ENCODE measurements at regions of chr19 and their contacts with region 1.

Region 1: GRCh38 chr19:10388957-10389356 is 8.6 kb upstream of the TYK2 start:
- DNase-seq: peak; percentile 68 to 78 (median 75)
- H3K4me3 ChIP-seq: no peak overlapping the region
- H3K4me3 Mint-ChIP-seq: no peak overlapping the region
- H3K27ac ChIP-seq: no peak overlapping the region
- H3K27ac Mint-ChIP-seq: peak overlapping the region; percentile 10 to 79 (median 47)
- H3K4me1 ChIP-seq: no peaks in the 10 kb centered on the region
- H3K4me1 Mint-ChIP-seq: peaks cover 5 to 11% (median 6%) of the 10 kb centered on the region in 4 donors
- H3K27me3 ChIP-seq: no peaks in the 10 kb centered on the region
- H3K27me3 Mint-ChIP-seq: no peaks in the 10 kb centered on the region

Region 2: GRCh38 chr19:10259162-10259905 is 129.6 kb before region 1 on chr19:
- CTCF ChIA-PET with region 1: interaction called, 235 read pairs
- POLR2A ChIA-PET with region 1: interaction called, 19 read pairs
- intact Hi-C with region 1: loop called (anchors 1 kb)
- DNase-seq: peak; percentile 82 to 94 (median 86)
- H3K4me3 ChIP-seq: no peak overlapping the region
- H3K4me3 Mint-ChIP-seq: peak overlapping the region in 1 of 8 donors; percentile 68
- H3K27ac ChIP-seq: peak overlapping the region; percentile 16
- H3K27ac Mint-ChIP-seq: peak overlapping the region in 4 of 7 donors; percentile 17 to 76 (median 54)
- H3K4me1 ChIP-seq: peaks cover 20% of the 10 kb centered on the region
- H3K4me1 Mint-ChIP-seq: peaks cover 5 to 17% (median 8%) of the 10 kb centered on the region in 4 donors
- H3K27me3 ChIP-seq: no peaks in the 10 kb centered on the region
- H3K27me3 Mint-ChIP-seq: no peaks in the 10 kb centered on the region

Region 3: GRCh38 chr19:10279737-10280442 is 109.1 kb before region 1 on chr19:
- CTCF ChIA-PET with region 1: interaction called, 15 read pairs
- POLR2A ChIA-PET with region 1: no interaction called
- intact Hi-C with region 1: no loop called
- DNase-seq: no peak
- H3K4me3 ChIP-seq: no peak overlapping the region
- H3K4me3 Mint-ChIP-seq: no peak overlapping the region
- H3K27ac ChIP-seq: no peak overlapping the region
- H3K27ac Mint-ChIP-seq: peak overlapping the region in 2 of 7 donors; percentile 20 to 70
- H3K4me1 ChIP-seq: no peaks in the 10 kb centered on the region
- H3K4me1 Mint-ChIP-seq: peaks cover 2 to 10% (median 7%) of the 10 kb centered on the region in 4 donors
- H3K27me3 ChIP-seq: no peaks in the 10 kb centered on the region
- H3K27me3 Mint-ChIP-seq: no peaks in the 10 kb centered on the region

Region 4: GRCh38 chr19:10286803-10287737 is 101.9 kb before region 1 on chr19 and contains the start of gene ICAM4:
- CTCF ChIA-PET with region 1: interaction called, 20 read pairs
- POLR2A ChIA-PET with region 1: no interaction called
- intact Hi-C with region 1: no loop called
- DNase-seq: peak in 2 of 5 donors; percentile 19 to 25
- H3K4me3 ChIP-seq: peak within 1 kb of the TSS in 1 of 2 donors; percentile 19
- H3K4me3 Mint-ChIP-seq: peak within 1 kb of the TSS; percentile 43 to 82 (median 68)
- H3K27ac ChIP-seq: no peak within 1 kb of the TSS
- H3K27ac Mint-ChIP-seq: peak within 1 kb of the TSS in 5 of 7 donors; percentile 36 to 89 (median 60)
- H3K4me1 ChIP-seq: peaks cover 65% of the 10 kb centered on the region
- H3K4me1 Mint-ChIP-seq: peaks cover 29 to 68% (median 46%) of the 10 kb centered on the region in 4 donors
- H3K27me3 ChIP-seq: peaks cover 43% of the 10 kb centered on the region
- H3K27me3 Mint-ChIP-seq: peaks cover 24 to 29% of the 10 kb centered on the region in 2 donors
- total RNA-seq, gene ICAM4: 0.70 to 1.3 TPM

Region 5: DNA sequence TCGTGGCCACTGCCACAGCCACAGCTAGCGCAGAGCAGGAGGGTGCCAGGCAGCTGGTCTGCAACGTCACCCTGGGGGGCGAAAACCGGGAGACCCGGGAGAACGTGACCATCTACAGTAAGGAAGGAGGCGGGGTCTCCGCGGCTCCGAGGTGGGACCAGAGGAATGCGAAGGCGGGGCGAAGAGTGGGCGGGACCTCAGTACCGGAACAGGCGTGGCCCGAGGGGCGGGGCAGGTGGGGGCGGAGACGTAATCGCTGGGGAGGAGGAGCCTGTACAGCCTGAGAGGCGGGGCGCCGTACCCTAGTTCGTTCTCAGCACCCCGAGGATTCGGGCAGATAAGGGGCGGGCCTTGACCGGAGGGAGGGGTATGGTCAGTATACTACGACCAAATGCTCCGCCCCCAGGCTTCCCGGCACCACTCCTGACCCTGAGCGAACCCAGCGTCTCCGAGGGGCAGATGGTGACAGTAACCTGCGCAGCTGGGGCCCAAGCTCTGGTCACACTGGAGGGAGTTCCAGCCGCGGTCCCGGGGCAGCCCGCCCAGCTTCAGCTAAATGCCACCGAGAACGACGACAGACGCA is 96.7 kb before region 1 on chr19:
- CTCF ChIA-PET with region 1: interaction called, 20 read pairs
- POLR2A ChIA-PET with region 1: no interaction called
- intact Hi-C with region 1: no loop called
- DNase-seq: peak; percentile 49 to 68 (median 55)
- H3K4me3 ChIP-seq: peak overlapping the region; percentile 34 to 58
- H3K4me3 Mint-ChIP-seq: peak overlapping the region; percentile 67 to 89 (median 79)
- H3K27ac ChIP-seq: no peak overlapping the region
- H3K27ac Mint-ChIP-seq: peak overlapping the region in 4 of 7 donors; percentile 37 to 89 (median 68)
- H3K4me1 ChIP-seq: peaks cover 82% of the 10 kb centered on the region
- H3K4me1 Mint-ChIP-seq: peaks cover 36 to 73% (median 56%) of the 10 kb centered on the region in 4 donors
- H3K27me3 ChIP-seq: peaks cover 67% of the 10 kb centered on the region
- H3K27me3 Mint-ChIP-seq: peaks cover 43 to 48% of the 10 kb centered on the region in 2 donors

Region 6: DNA sequence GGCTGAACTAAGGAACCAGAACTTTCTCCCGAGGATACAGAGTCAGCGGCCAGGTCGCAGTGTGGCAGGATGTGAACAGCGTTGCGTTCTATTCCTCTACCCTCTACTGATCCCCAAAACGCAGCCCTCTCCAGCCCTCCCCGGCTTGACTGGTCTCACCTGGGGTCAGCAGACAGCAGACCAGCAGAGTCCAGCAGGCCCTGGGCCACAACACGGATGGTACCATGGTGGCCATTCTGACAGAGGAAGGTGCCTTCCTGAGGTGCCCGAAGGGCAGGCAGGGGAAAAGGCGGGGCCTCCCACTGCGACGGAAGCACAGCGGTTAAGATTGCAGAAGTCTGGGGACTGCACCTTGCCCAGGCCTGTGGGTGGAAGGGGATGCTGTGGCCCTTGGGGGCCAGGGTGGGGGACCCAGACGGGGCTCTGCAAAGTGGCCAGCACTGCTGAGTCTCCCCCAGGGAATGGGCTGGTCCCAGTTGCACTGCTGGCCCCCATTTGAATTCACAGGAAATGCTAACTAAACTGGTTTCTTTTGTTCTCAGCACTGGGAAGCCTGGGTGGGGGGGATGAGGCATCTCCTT is 49.5 kb before region 1 on chr19 and contains the start of gene ICAM3:
- CTCF ChIA-PET with region 1: interaction called, 12 read pairs
- POLR2A ChIA-PET with region 1: no interaction called
- intact Hi-C with region 1: no loop called
- DNase-seq: peak; percentile 44 to 65 (median 51)
- H3K4me3 ChIP-seq: peak within 1 kb of the TSS; percentile 39 to 80
- H3K4me3 Mint-ChIP-seq: peak within 1 kb of the TSS; percentile 91 to 99 (median 96)
- H3K27ac ChIP-seq: peak within 1 kb of the TSS; percentile 82
- H3K27ac Mint-ChIP-seq: peak within 1 kb of the TSS; percentile 85 to 97 (median 96)
- H3K4me1 ChIP-seq: peaks cover 38% of the 10 kb centered on the region
- H3K4me1 Mint-ChIP-seq: peaks cover 14 to 46% (median 25%) of the 10 kb centered on the region in 4 donors
- H3K27me3 ChIP-seq: no peaks in the 10 kb centered on the region
- H3K27me3 Mint-ChIP-seq: no peaks in the 10 kb centered on the region
- total RNA-seq, gene ICAM3: 191 to 193 TPM

Region 7: DNA sequence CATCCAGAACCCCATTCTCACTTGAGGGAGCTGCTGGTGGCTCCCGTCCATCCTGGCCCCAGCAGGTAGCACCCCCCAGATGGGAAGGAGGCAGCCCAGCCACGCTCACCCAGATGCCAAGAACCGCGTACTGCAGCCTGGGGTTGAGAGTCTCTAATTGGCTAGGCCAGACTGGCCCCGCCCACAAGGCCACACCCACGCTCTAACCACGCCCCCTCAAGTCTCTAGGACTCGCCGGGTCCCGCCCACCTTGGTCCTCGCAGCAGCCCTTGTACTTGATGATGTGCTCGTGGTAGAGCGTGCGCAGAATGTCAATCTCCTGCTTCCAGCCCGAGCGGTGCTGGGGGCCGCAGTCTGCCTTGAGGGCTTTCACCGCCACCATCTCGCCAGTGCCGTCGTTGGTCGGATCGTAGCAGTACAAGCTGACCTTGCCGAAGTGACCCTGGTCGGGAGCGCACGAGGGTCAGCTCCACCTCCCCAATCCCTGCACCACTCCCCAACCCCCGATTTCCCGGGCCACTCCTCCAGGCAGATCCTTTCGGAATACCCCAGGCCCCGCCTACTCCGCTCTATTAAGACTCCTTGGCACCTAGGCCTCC is 35.1 kb before region 1 on chr19:
- CTCF ChIA-PET with region 1: no interaction called
- POLR2A ChIA-PET with region 1: no interaction called
- intact Hi-C with region 1: no loop called
- DNase-seq: peak in 3 of 5 donors; percentile 8 to 28 (median 23)
- H3K4me3 ChIP-seq: no peak overlapping the region
- H3K4me3 Mint-ChIP-seq: no peak overlapping the region
- H3K27ac ChIP-seq: no peak overlapping the region
- H3K27ac Mint-ChIP-seq: peak overlapping the region in 1 of 7 donors; percentile 41
- H3K4me1 ChIP-seq: no peaks in the 10 kb centered on the region
- H3K4me1 Mint-ChIP-seq: no peaks in the 10 kb centered on the region
- H3K27me3 ChIP-seq: no peaks in the 10 kb centered on the region
- H3K27me3 Mint-ChIP-seq: no peaks in the 10 kb centered on the region

Region 8: DNA sequence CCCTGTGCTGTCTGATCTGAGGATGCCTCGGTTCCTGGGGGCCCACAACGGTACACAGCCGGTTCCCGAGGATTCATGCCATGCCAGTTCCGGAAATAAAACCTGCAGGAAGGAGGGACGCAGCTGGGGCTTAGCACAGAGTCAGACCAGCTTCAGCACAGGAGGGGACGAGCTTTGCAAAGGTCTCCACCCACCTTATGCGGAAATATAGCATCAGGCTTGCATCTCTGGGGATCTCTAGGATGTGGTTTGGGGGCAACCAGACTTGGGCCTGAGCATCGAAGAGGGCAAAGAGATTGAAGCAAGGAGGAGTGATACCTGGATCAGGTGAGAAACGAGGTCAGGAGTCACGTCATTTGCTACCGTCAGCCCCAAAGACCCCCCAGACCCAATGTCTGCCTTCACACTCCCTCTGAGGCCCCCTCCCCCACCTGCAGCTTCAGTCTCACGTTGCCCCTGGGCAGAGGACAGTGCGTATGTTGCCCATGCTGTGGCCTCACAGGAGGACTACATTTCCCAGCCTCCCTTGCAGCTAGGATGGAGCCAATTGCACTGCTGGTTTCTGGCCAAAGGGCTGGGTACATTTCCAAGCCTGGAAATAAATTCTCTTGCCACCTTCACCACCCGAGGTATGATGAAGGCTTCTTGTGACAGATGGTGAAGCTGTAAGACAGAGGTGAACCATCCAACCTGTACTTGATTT is 20.7 kb before region 1 on chr19:
- CTCF ChIA-PET with region 1: interaction called, 10 read pairs
- POLR2A ChIA-PET with region 1: no interaction called
- intact Hi-C with region 1: no loop called
- DNase-seq: no peak
- H3K4me3 ChIP-seq: no peak overlapping the region
- H3K4me3 Mint-ChIP-seq: no peak overlapping the region
- H3K27ac ChIP-seq: no peak overlapping the region
- H3K27ac Mint-ChIP-seq: no peak overlapping the region
- H3K4me1 ChIP-seq: no peaks in the 10 kb centered on the region
- H3K4me1 Mint-ChIP-seq: peaks cover 0 to 9% (median 0%) of the 10 kb centered on the region in 4 donors
- H3K27me3 ChIP-seq: no peaks in the 10 kb centered on the region
- H3K27me3 Mint-ChIP-seq: no peaks in the 10 kb centered on the region

Measured in CD4-positive, alpha-beta memory T cell (primary cell).